Activated CD8-positive, alpha-beta T cell treated with anti-CD3 and anti-CD28 coated beads, Interleukin-2, amount 10 ng/mL, durations not matched to agents 7 days and 5 days (primary cell): ENCODE measurements at regions of chr13 and their contacts with region 1.

Region 1: DNA sequence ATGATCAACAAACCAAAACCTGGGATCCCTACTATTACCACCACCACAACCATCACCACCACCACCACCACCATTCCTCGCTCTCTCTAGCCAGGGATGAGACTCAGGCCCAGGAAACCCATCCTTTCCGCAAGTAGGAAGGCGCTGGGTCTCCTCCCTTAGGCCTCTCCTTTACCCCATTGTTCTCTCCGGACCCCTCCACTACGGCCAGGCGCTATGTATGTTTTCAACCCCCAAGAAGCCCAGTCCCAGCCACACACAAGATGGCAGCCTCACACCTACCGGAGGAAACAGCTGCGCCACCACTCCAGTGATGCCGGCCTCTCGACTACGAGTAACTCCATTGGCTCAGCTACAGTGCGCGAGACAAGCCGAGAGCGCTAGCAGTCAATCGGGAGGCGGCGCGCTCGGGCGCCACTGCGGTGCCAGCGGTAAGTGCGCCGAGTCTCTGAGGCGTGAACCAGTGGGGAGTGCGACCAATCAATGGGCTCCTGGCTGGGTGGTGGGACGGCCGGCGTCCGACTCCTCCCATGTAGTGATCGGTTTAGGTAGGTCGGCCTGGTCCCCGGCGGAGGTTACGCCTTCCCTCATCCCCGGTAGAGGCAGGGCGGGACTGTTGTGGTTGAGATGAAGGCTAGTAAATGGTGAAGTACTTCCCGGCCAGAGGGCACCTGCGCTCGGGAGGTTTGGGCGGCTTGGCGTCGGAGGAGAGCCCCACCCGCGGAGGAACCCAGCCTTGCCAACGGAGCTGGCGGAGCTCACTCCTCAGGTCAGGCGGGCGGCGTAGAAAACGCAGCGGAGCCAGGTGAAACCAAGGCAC is at the starts of genes CAB39L and SETDB2:
- DNase-seq: peak; percentile 100
- ATAC-seq: peak; percentile 96
- H3K4me3 Mint-ChIP-seq: peak within 1 kb of the TSS; percentile 96
- H3K27ac Mint-ChIP-seq: peak within 1 kb of the TSS; percentile 99
- H3K4me1 Mint-ChIP-seq: peaks cover 52% of the 10 kb centered on the region
- H3K27me3 Mint-ChIP-seq: peaks cover 8% of the 10 kb centered on the region
- total RNA-seq, gene CAB39L: 2.3 to 2.6 TPM
- total RNA-seq, gene SETDB2: 13.5 to 15.1 TPM

Region 2: GRCh38 chr13:49454388-49455006 is 10.6 kb after region 1 on chr13:
- CTCF ChIA-PET with region 1: interaction called, 10 read pairs
- POLR2A ChIA-PET with region 1: interaction called, 9 read pairs
- DNase-seq: no peak
- ATAC-seq: peak; percentile 76
- H3K4me3 Mint-ChIP-seq: no peak overlapping the region
- H3K27ac Mint-ChIP-seq: peak overlapping the region; percentile 69
- H3K4me1 Mint-ChIP-seq: peaks cover 24% of the 10 kb centered on the region
- H3K27me3 Mint-ChIP-seq: no peaks in the 10 kb centered on the region

Region 3: GRCh38 chr13:49495783-49496762 is 52.2 kb after region 1 on chr13 and contains the start of gene PHF11:
- CTCF ChIA-PET with region 1: interaction called, 3 read pairs
- POLR2A ChIA-PET with region 1: interaction called, 93 read pairs
- DNase-seq: peak; percentile 90
- ATAC-seq: peak; percentile 87
- H3K4me3 Mint-ChIP-seq: peak within 1 kb of the TSS; percentile 98
- H3K27ac Mint-ChIP-seq: peak within 1 kb of the TSS; percentile 99
- H3K4me1 Mint-ChIP-seq: peaks cover 55% of the 10 kb centered on the region
- H3K27me3 Mint-ChIP-seq: no peaks in the 10 kb centered on the region
- total RNA-seq, gene PHF11: 93.4 to 94.8 TPM

Region 4: DNA sequence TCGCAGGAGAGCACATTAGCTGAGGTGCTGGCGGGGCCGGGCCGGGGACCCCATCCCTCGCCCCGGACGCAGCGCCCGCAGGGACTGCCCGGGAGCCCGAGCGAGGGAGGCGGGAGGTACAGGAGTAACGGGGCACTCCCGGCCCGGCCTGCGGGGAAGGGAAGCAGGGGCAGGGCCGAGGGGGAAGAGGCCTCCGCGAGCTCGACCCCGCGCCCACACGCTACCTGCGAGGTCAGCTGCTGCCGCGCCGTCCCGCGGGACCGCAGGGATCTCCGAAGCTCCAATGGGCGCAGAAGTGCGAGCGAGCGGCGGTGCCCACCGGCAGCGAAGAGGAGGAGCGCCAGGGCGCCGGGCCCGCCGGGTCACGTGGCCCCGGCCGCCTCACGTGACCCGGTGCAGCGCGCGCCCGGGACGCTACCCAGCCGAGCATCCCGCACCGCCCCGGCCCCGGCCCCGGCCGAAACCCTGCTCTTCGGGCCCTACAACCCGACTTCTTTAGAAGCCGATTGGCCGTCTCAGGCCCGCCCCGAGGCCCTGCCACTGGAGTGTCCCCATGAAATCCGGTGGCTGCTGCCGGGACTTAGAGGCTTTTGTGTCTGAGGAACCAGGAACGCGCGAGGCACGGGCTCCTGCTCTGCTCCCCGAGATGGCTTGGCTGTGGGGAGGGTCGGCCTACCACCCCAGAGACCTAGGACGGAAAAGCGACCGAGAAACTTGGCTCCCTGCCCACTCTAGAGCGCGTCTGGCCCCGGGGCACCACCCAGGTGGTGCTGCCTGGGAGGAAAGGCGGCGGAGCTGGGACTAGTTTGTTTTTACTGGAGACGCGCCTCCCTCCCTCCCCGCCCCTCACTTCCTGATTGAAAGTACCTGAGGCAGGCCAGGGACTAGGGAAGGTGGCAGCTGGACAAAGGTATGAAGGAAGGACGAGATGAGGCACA is 141.6 kb after region 1 on chr13 and contains the start of gene RCBTB1:
- CTCF ChIA-PET with region 1: no interaction called
- POLR2A ChIA-PET with region 1: interaction called, 14 read pairs
- DNase-seq: peak; percentile 73
- ATAC-seq: peak; percentile 98
- H3K4me3 Mint-ChIP-seq: peak within 1 kb of the TSS; percentile 88
- H3K27ac Mint-ChIP-seq: peak within 1 kb of the TSS; percentile 85
- H3K4me1 Mint-ChIP-seq: peaks cover 32% of the 10 kb centered on the region
- H3K27me3 Mint-ChIP-seq: peaks cover 2% of the 10 kb centered on the region
- total RNA-seq, gene RCBTB1: 18.6 to 19.3 TPM